ENCODE measurements at regions of chr14 and their contacts with region 1.

Region 1: GRCh38 chr14:24332268-24332993 is 2.4 kb downstream of the ADCY4 start:
- DNase-seq: peak; percentile 91
- CTCF ChIP-seq: peak; percentile 73

Region 2: GRCh38 chr14:24299255-24300195 is 32.9 kb before region 1 on chr14 and contains the starts of genes DHRS1 and NOP9:
- CTCF ChIA-PET with region 1: interaction called, 29 read pairs
- POLR2A ChIA-PET with region 1: no interaction called
- DNase-seq: peak; percentile 96
- CTCF ChIP-seq: no peak

Region 3: DNA sequence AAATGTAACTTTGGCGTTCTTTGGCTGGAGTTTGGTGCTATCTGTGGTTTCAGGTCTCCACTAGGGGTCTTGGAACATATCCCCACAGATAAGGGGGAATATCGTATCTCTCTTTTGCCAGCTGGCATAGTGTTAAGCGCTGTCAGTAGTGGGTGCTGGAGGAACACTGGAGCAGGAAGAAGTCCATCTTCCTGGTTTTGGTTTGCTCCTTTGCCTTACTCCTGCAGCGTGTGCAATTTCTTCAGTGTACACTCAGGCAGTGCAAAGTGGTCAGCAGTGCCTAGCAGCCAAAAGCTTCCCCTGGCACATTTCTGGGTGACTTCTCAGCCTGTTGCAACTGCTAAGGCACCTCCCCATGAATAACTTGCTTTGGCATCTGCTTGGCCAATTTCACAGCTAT is 19.1 kb after region 1 on chr14:
- CTCF ChIA-PET with region 1: interaction called, 71 read pairs
- POLR2A ChIA-PET with region 1: no interaction called
- DNase-seq: no peak
- CTCF ChIP-seq: no peak

Region 4: DNA sequence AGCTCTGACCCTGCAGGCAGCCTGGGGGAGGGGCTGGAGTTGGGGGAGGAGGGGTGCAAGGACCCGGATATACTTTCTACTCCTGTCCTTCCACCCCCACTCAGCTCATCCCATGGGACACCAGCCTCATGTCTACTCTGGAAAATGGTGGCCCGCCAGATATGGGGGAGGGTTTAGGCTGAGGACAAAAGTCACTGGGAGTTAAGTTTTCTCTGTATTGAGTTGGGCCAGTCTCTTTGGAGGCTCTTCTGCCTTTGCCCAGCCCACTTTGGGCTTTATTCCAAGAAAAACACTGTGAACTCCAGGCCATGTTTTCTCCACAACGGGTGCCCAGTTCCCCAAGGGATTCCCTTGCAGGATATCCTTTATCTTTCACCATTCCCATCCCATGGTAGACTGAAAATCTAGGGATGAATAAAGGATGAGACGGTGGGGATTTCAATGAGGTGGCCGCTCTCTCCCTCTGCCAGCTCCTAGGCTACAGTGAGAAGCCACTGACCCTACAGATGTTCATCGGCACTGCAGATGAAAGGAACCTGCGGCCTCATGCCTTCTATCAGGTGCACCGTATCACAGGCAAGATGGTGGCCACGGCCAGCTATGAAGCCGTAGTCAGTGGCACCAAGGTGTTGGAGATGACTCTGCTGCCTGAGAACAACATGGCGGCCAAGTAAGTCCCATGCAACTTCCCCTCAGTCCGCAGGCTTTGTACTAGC is 40.4 kb after region 1 on chr14:
- CTCF ChIA-PET with region 1: interaction called, 16 read pairs
- POLR2A ChIA-PET with region 1: no interaction called
- DNase-seq: no peak
- CTCF ChIP-seq: no peak

Region 5: GRCh38 chr14:24418492-24418873 is 86.1 kb after region 1 on chr14:
- CTCF ChIA-PET with region 1: interaction called, 17 read pairs
- POLR2A ChIA-PET with region 1: no interaction called
- DNase-seq: no peak
- CTCF ChIP-seq: no peak

Region 6: GRCh38 chr14:24442273-24443052 is 110.0 kb after region 1 on chr14 and contains the start of gene SDR39U1:
- CTCF ChIA-PET with region 1: interaction called, 629 read pairs
- POLR2A ChIA-PET with region 1: interaction called, 3 read pairs
- DNase-seq: peak; percentile 95
- CTCF ChIP-seq: no peak

Measured in GM10248 (cell line).